HEK293 (cell line): ENCODE measurements at regions of chrX and their contacts with region 1.

Region 1: GRCh38 chrX:153507484-153508178 is 9.8 kb upstream of the ATP2B3 start:
- H3K4me3 ChIP-seq: no peak overlapping the region
- H3K27ac ChIP-seq: no peak overlapping the region
- H3K4me1 ChIP-seq: no peaks in the 10 kb centered on the region
- CTCF ChIP-seq: peak; percentile 97

Region 2: GRCh38 chrX:153214934-153215333 is 292.7 kb before region 1 on chrX:
- CTCF ChIA-PET with region 1: no interaction called
- POLR2A ChIA-PET with region 1: no interaction called
- H3K4me3 ChIP-seq: no peak overlapping the region
- H3K27ac ChIP-seq: no peak overlapping the region
- H3K4me1 ChIP-seq: no peaks in the 10 kb centered on the region
- CTCF ChIP-seq: no peak

Region 3: GRCh38 chrX:153460845-153461244 is 46.8 kb before region 1 on chrX:
- CTCF ChIA-PET with region 1: interaction called, 81 read pairs
- POLR2A ChIA-PET with region 1: interaction called, 5 read pairs
- H3K4me3 ChIP-seq: no peak overlapping the region
- H3K27ac ChIP-seq: no peak overlapping the region
- H3K4me1 ChIP-seq: no peaks in the 10 kb centered on the region
- CTCF ChIP-seq: peak; percentile 58

Region 4: DNA sequence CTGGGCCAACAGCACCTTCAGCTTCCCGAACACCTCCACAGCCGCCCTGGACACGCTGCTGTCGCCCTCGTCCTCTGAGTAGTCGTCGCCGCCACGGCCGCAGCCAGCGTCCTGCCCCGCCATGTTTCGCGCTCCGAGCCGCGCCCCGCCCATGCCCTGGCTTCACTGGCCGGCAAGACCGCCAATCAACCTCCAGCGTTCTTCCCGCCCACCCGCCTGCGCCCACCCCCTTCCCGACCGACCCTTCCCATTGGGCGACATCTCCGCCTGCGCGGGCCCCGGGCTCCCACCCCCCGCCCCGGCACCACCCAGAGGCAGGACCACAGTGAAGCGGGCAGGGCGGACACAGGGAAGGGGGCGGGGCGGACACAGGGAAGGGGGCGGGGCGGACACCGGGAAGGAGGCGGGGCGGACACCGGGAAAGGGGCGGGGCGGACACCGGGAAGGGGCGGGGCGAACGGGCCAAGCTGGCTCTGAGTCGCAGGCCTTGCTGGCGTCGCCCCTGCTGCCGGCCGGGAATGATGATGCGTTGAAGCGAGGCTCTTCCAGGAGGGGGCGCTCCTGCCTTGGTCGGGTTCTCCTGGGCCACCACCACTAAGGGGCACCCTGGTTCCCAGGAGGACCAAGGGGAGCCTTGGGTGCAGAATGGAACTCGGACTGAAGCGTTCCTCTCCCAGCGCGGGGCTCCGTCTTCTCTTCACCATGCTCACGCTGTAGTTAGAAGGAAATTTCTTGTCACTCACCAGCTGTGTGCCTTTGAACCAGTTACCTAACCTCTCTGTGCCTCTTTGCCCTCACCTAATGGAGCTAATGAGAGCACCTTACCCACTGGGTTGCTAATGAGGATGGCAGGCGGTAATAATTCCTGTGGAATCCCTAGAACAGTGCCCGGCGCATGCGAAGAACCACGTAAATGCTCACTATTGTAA is 36.9 kb before region 1 on chrX and contains the start of gene HAUS7:
- CTCF ChIA-PET with region 1: interaction called, 89 read pairs
- POLR2A ChIA-PET with region 1: interaction called, 7 read pairs
- H3K4me3 ChIP-seq: peak within 1 kb of the TSS; percentile 67
- H3K27ac ChIP-seq: peak within 1 kb of the TSS; percentile 55; the same call in 1 of the 2 replicates
- H3K4me1 ChIP-seq: no peaks in the 10 kb centered on the region
- CTCF ChIP-seq: peak; percentile 97

Region 5: GRCh38 chrX:153476647-153477362 is 30.8 kb before region 1 on chrX:
- CTCF ChIA-PET with region 1: interaction called, 89 read pairs
- POLR2A ChIA-PET with region 1: interaction called, 5 read pairs
- H3K4me3 ChIP-seq: no peak overlapping the region
- H3K27ac ChIP-seq: no peak overlapping the region
- H3K4me1 ChIP-seq: no peaks in the 10 kb centered on the region
- CTCF ChIP-seq: no peak

Region 6: DNA sequence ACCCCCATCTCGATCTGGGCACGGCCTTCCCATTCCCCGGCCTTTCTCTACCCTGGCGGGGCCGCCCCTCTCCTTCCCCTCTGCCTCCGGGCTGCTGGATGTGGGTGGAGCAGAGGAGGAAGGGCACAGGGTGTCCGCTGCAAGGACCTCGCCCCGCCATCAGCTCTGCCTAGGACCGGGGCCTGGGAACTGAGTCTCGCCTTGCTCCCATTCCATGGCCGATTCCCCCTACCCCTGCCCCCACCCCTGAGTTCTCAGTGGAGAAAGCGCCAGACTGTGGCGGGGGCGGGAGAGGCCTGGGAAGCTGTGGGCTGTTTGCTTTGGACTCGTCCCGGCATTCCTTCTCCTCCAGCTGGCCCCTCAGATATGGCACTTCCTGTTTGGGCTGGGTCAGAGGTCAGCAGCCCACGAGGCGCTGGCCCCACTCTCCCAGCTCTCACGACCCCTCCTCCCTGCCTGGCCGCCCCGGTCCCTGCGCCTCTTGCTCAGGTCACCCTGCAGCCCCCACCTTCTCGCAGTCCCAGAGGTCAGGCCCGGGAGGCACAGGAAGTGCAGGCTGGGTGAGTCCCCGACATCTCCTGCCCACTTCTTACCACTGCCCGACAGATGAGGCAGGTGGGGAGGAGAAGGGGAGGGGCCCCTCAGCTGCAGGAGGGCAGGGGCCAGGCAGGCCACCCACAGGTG is 19.3 kb before region 1 on chrX:
- CTCF ChIA-PET with region 1: interaction called, 30 read pairs
- POLR2A ChIA-PET with region 1: no interaction called
- H3K4me3 ChIP-seq: no peak overlapping the region
- H3K27ac ChIP-seq: no peak overlapping the region
- H3K4me1 ChIP-seq: no peaks in the 10 kb centered on the region
- CTCF ChIP-seq: no peak

Region 7: DNA sequence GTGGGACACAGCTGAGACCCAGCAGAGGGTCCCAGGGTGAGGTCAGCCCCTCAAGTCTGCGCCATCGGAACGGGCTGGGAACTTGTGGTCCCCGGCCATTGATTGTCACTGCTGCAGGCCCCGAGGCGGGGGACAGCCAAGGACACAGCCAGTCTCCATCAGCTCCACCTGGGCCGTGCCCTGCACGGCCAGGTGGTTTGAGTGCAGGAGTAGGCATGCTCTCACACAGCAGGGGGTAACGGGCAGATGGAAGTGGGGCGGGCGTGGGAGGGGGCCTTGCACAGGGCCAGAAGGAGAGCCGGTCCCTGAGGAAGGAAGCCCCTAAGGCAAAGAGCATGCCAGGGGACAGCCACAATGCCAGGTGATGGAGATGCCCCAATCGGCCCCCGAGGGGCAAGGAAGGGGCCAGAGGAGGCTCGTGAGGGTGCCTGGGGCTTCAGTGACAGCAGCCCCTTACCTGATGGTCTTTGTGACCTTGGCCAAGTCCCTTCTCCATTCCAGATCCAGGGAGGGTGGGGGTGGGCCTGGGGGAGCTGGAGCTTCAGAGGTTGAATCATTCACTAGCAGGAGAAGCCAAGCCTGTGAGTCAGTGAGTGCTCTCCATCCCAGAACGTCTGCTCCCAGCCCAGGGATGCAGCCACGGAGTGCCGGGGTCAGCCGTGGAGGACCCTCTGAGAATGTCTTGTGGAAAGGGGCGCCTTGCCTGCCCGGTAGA is 12.1 kb after region 1 on chrX:
- CTCF ChIA-PET with region 1: interaction called, 14 read pairs
- POLR2A ChIA-PET with region 1: no interaction called
- H3K4me3 ChIP-seq: no peak overlapping the region
- H3K27ac ChIP-seq: no peak overlapping the region
- H3K4me1 ChIP-seq: no peaks in the 10 kb centered on the region
- CTCF ChIP-seq: no peak

Region 8: DNA sequence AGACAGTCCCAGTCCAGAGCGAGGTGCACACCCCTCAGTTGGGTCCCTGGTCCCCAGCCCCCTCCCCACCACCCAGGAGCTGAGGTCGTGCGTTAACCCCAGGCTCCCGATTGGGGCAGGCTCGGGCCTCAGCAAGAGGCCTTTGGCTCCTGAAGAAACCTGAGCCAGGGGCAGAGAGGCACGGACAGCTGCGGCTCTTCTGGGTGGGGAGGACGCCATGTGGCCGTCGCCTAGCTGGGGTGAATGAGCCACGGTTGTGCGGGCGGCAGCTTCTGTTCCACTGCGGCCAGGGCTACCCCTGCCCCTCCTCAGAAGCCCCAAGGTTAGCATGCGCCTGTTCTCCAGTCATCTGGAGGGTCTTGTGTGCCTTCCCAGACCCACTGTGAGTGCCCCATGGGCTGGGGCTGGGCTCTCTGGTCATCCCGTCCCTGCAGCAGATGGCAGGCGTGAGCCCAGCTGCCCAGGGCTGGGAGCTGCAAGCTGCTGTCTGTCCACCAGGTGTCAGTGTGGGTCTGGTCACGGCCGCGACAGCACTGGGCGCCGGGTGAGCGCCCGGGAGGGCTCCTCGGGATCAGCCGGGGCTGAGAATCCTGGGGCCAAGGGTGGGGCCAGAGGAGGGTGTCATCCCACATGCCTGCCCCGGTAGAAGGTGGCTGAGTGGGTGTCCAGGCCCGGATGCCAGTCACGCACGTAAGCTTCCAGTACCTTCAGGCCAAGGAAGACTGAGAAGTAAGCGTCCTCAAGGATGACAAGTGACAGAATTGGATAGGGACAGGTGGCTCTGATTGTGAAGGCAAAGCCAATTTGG is 31.7 kb after region 1 on chrX:
- CTCF ChIA-PET with region 1: interaction called, 17 read pairs
- POLR2A ChIA-PET with region 1: no interaction called
- H3K4me3 ChIP-seq: no peak overlapping the region
- H3K27ac ChIP-seq: no peak overlapping the region
- H3K4me1 ChIP-seq: no peaks in the 10 kb centered on the region
- CTCF ChIP-seq: peak; percentile 99

Region 9: GRCh38 chrX:153592966-153593688 is 85.5 kb after region 1 on chrX:
- CTCF ChIA-PET with region 1: no interaction called
- POLR2A ChIA-PET with region 1: no interaction called
- H3K4me3 ChIP-seq: no peak overlapping the region
- H3K27ac ChIP-seq: no peak overlapping the region
- H3K4me1 ChIP-seq: no peaks in the 10 kb centered on the region
- CTCF ChIP-seq: no peak